Activated CD8-positive, alpha-beta T cell treated with anti-CD3 and anti-CD28 coated beads for 36 hours (primary cell): ENCODE measurements at regions of chr10 and their contacts with region 1.

Region 1: GRCh38 chr10:72162978-72163377 is 52.8 kb upstream of the ANAPC16 start:
- DNase-seq: peak; percentile 50
- ATAC-seq: peak; percentile 93
- H3K4me3 Mint-ChIP-seq: peak overlapping the region; percentile 26
- H3K27ac Mint-ChIP-seq: peak overlapping the region; percentile 66
- H3K4me1 Mint-ChIP-seq: peaks cover 24% of the 10 kb centered on the region
- H3K27me3 Mint-ChIP-seq: no peaks in the 10 kb centered on the region
- CTCF ChIP-seq: no peak

Region 2: GRCh38 chr10:72088015-72088888 is 74.7 kb before region 1 on chr10 and contains the start of gene SPOCK2:
- CTCF ChIA-PET with region 1: no interaction called
- POLR2A ChIA-PET with region 1: no interaction called
- intact Hi-C with region 1: no loop called
- DNase-seq: peak; percentile 80
- ATAC-seq: peak; percentile 58
- H3K4me3 Mint-ChIP-seq: peak within 1 kb of the TSS; percentile 96
- H3K27ac Mint-ChIP-seq: peak within 1 kb of the TSS; percentile 97
- H3K4me1 Mint-ChIP-seq: peaks cover 60% of the 10 kb centered on the region
- H3K27me3 Mint-ChIP-seq: no peaks in the 10 kb centered on the region
- CTCF ChIP-seq: no peak
- total RNA-seq, gene SPOCK2: 134 to 135 TPM

Region 3: GRCh38 chr10:72107325-72108003 is 55.5 kb before region 1 on chr10:
- CTCF ChIA-PET with region 1: no interaction called
- POLR2A ChIA-PET with region 1: no interaction called
- intact Hi-C with region 1: no loop called
- DNase-seq: peak; percentile 56
- ATAC-seq: peak; percentile 56
- H3K4me3 Mint-ChIP-seq: peak overlapping the region; percentile 69
- H3K27ac Mint-ChIP-seq: peak overlapping the region; percentile 86
- H3K4me1 Mint-ChIP-seq: peaks cover 70% of the 10 kb centered on the region
- H3K27me3 Mint-ChIP-seq: no peaks in the 10 kb centered on the region
- CTCF ChIP-seq: no peak

Region 4: GRCh38 chr10:72194949-72195348 is 32.0 kb after region 1 on chr10:
- CTCF ChIA-PET with region 1: no interaction called
- POLR2A ChIA-PET with region 1: no interaction called
- intact Hi-C with region 1: no loop called
- DNase-seq: no peak
- ATAC-seq: no peak
- H3K4me3 Mint-ChIP-seq: no peak overlapping the region
- H3K27ac Mint-ChIP-seq: no peak overlapping the region
- H3K4me1 Mint-ChIP-seq: no peaks in the 10 kb centered on the region
- H3K27me3 Mint-ChIP-seq: no peaks in the 10 kb centered on the region
- CTCF ChIP-seq: no peak

Region 5: GRCh38 chr10:72215652-72216549 is 52.9 kb after region 1 on chr10 and contains the starts of genes ANAPC16 and ASCC1:
- CTCF ChIA-PET with region 1: no interaction called
- POLR2A ChIA-PET with region 1: interaction called, 3 read pairs
- intact Hi-C with region 1: loop called (anchors 5 kb)
- DNase-seq: peak; percentile 94
- ATAC-seq: peak; percentile 85
- H3K4me3 Mint-ChIP-seq: peak within 1 kb of the TSS; percentile 93
- H3K27ac Mint-ChIP-seq: peak within 1 kb of the TSS; percentile 95
- H3K4me1 Mint-ChIP-seq: peaks cover 40% of the 10 kb centered on the region
- H3K27me3 Mint-ChIP-seq: no peaks in the 10 kb centered on the region
- CTCF ChIP-seq: no peak
- total RNA-seq, gene ANAPC16: 94.6 to 101 TPM
- total RNA-seq, gene ASCC1: 61.6 to 66.2 TPM

Region 6: GRCh38 chr10:72426986-72427385 is 264.0 kb after region 1 on chr10:
- CTCF ChIA-PET with region 1: no interaction called
- POLR2A ChIA-PET with region 1: no interaction called
- intact Hi-C with region 1: no loop called
- DNase-seq: no peak
- ATAC-seq: no peak
- H3K4me3 Mint-ChIP-seq: no peak overlapping the region
- H3K27ac Mint-ChIP-seq: no peak overlapping the region
- H3K4me1 Mint-ChIP-seq: no peaks in the 10 kb centered on the region
- H3K27me3 Mint-ChIP-seq: no peaks in the 10 kb centered on the region
- CTCF ChIP-seq: no peak